Mammary epithelial cell (primary cell): ENCODE measurements at regions of chr10 and their contacts with region 1.

Region 1: DNA sequence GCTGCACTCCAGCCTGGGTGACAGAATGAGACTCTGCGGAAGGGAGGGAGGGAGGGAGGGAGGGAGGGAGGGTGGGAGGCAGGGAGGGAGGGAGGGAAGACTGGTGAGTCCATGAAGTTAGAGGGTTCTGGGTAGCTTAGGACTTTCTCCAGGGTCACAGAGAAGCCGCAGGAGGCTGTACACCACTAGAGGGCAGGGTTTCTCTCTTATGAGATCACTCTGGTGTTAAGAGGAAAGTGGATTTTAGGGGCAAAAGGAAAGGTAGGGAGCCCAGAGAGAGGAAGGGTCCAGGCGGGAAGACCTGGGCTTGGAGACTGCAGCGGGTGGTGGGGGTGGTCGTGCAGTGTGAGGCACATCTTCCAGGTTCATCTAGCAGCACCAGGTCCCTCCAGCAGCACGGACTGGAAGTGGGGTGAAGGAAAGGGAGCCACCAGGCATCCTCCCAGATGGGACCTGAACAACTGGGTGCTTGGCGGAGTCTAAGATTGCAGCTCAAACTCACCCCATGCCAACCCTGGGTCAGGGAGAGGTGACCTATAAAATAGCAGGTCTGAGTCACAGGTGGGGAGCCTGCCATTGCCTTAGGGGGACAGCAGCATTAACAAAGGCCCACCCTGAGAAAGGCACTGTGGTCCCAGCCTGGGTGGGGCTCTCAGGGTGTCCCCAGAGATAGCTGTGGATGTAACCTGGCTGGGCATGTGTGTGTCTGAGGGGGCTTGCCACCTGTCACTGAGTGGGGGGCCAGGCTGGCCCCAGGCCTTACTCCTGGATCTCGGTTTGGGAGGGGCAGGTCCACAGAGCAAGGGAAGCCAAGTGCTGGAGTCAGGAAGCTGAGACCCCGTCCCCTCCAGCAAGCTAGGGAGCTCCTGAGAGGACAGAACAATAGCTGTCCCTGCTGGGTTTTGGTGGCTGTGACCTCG is 48.5 kb upstream of the SLC29A3 start:
- DNase-seq: peak; percentile 31
- H3K4me3 ChIP-seq: no peak overlapping the region
- H3K27ac ChIP-seq: no peak overlapping the region
- H3K4me1 ChIP-seq: peaks cover 6% of the 10 kb centered on the region
- H3K27me3 ChIP-seq: no peaks in the 10 kb centered on the region
- CTCF ChIP-seq: peak; percentile 63 to 71

Region 2: GRCh38 chr10:70920565-70920964 is 350.0 kb before region 1 on chr10:
- CTCF ChIA-PET with region 1: no interaction called
- dilution Hi-C with region 1: loop called (anchors 5 kb)
- in situ Hi-C with region 1: no loop called
- intact Hi-C with region 1: loop called (anchors 1 kb)
- DNase-seq: peak; percentile 34
- H3K4me3 ChIP-seq: no peak overlapping the region
- H3K27ac ChIP-seq: no peak overlapping the region
- H3K4me1 ChIP-seq: no peaks in the 10 kb centered on the region
- H3K27me3 ChIP-seq: peaks cover 2% of the 10 kb centered on the region
- CTCF ChIP-seq: peak in 1 of 2 donors; percentile 18

Region 3: DNA sequence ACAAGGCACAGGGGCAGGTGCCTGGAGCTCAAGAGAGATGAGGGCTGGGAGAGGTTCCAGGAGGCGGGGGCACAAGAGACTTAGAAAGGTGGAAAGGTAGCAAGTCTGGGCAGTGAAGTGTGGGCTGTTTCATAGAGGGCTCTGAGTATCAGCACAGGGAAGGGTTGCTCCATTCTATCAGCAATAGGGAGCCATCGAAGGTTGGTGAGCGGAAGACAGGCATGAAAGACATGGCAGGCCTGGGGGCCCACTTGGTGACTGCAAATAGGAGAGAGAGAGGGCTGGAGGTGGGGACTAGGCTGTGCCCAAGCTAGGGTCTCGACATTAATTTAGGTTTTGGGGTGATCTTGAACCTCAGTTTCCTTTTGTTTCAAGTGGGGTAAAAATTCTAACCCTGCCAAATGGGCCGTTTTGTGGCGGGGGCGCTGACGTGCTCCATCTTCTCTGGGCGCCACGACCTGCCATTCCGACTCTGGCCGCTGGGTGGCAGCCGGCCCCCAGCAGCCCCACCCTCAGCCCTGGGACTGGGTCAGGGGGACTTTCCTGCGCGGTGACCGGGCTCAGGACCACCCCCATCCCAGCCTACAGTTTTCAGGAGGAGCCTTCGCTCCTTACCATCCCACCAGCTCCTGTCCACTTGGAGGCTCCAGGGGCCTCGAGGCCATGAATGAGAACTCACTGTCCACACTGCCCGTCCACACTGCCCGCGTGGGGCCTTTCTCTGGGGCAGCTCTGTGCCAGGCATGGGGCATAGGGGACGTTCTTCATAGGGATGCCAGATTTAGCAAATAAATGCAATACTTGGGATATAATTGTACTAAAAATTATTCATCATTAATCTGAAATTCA is 345.0 kb before region 1 on chr10:
- CTCF ChIA-PET with region 1: no interaction called
- dilution Hi-C with region 1: loop called (anchors 5 kb)
- in situ Hi-C with region 1: no loop called
- intact Hi-C with region 1: loop called (anchors 1 kb)
- DNase-seq: no peak
- H3K4me3 ChIP-seq: no peak overlapping the region
- H3K27ac ChIP-seq: no peak overlapping the region
- H3K4me1 ChIP-seq: peaks cover 6% of the 10 kb centered on the region
- H3K27me3 ChIP-seq: peaks cover 2% of the 10 kb centered on the region
- CTCF ChIP-seq: peak; percentile 79 to 96

Region 4: GRCh38 chr10:71010730-71011129 is 259.8 kb before region 1 on chr10:
- CTCF ChIA-PET with region 1: no interaction called
- dilution Hi-C with region 1: no loop called
- in situ Hi-C with region 1: no loop called
- intact Hi-C with region 1: loop called (anchors 5 kb)
- DNase-seq: no peak
- H3K4me3 ChIP-seq: no peak overlapping the region
- H3K27ac ChIP-seq: no peak overlapping the region
- H3K4me1 ChIP-seq: no peaks in the 10 kb centered on the region
- H3K27me3 ChIP-seq: peaks cover 3% of the 10 kb centered on the region
- CTCF ChIP-seq: peak in 1 of 2 donors; percentile 28

Region 5: DNA sequence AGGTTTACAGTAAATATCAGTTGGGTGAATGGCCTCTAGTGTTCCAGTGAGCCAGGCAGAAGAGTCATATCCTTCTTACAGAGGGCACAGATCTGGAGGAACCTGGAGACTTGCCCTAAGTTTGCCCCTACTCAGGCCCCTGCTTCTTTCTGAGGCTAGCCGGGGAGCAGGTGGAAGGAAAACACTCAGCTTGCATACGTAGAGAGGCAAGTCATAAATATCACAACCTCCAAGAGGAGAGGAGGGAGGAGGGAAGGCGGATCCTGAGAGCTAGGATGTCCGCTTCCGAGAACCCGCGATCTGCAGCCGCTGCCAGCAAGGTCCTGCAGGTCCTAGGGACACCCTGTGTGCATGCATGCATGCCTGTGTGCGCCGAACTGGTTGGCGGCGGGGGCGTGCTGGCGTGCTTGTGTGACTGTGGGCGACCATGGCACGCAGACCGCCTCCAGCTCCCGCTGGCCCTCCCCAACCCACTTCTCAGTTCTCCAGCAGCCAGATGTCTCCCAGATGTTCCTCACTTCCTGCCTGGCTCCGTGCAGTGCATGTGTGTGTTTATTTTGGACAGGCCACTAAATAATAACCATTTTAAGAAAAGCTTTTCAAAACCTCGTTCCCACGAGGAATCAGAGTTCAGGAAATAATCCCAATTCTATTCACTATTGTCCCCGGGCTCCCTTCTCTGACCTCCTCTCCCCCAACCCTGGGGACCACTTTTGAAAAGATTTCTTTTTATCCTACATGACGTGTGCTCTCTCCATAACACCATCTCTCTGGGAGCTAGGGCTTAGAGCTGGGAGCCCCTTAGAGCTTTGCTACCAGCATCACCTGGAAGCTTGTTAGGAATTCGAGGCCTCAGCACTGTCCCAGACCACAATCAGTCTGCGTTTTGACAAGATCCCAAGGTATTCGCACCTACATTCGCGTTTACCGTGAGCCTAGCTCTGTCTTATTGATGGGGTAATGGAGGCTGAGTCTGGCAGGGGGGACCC is 25.8 kb before region 1 on chr10:
- CTCF ChIA-PET with region 1: no interaction called
- dilution Hi-C with region 1: no loop called
- in situ Hi-C with region 1: no loop called
- intact Hi-C with region 1: loop called (anchors 2 kb)
- DNase-seq: no peak
- H3K4me3 ChIP-seq: no peak overlapping the region
- H3K27ac ChIP-seq: peak overlapping the region; percentile 30
- H3K4me1 ChIP-seq: peaks cover 61% of the 10 kb centered on the region
- H3K27me3 ChIP-seq: no peaks in the 10 kb centered on the region
- CTCF ChIP-seq: no peak